ENCODE measurements at regions of chr19 and their contacts with region 1.

Region 1: DNA sequence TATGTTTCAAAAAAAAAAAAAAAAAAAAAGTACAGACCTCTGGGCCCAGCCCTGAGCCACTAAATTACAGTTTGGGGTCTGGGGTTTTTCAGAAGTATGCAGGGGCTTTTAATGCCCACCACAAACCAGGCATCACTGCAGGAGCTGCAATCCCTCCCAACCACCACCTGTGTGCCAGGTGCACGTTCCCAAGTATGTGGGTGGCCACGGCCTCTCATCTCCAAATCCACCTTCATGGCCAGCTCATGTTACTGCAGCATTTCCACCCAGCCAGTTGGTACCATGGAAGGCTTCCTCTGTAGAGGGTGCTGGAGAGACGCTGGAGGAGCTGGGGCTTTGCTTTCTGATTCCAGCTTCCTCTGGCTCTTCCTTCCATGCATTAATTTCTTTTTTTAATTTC is 26.5 kb downstream of the CEP89 start:
- DNase-seq: no peak
- ATAC-seq: no peak
- H3K4me3 ChIP-seq: no peak overlapping the region
- H3K27ac ChIP-seq: no peak overlapping the region
- H3K4me1 ChIP-seq: no peaks in the 10 kb centered on the region
- H3K27me3 ChIP-seq: no peaks in the 10 kb centered on the region
- CTCF ChIP-seq: no peak

Region 2: DNA sequence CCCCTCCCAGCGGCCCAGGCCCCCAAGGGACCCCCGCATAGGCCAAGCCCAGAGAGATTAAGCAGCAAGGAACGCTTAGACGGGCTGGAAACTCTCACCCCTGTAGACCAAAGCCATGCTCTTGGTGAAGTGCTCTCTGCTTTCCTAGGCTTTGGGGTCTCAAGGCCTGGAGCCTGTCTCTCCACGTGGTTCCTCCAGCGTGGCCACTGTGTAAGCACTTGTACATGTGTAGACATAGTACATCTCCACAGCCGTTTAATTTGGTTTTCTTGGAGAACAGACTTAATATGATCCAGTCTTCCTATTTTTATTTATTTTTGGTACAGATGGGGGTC is 252.6 kb before region 1 on chr19:
- CTCF ChIA-PET with region 1: no interaction called
- POLR2A ChIA-PET with region 1: interaction called, 10 read pairs
- in situ Hi-C with region 1: no loop called
- intact Hi-C with region 1: no loop called
- DNase-seq: no peak
- ATAC-seq: peak; percentile 6
- H3K4me3 ChIP-seq: peak overlapping the region; percentile 78 to 83
- H3K27ac ChIP-seq: peak overlapping the region; percentile 96
- H3K4me1 ChIP-seq: peaks cover 13% of the 10 kb centered on the region
- H3K27me3 ChIP-seq: no peaks in the 10 kb centered on the region
- CTCF ChIP-seq: no peak

Region 3: DNA sequence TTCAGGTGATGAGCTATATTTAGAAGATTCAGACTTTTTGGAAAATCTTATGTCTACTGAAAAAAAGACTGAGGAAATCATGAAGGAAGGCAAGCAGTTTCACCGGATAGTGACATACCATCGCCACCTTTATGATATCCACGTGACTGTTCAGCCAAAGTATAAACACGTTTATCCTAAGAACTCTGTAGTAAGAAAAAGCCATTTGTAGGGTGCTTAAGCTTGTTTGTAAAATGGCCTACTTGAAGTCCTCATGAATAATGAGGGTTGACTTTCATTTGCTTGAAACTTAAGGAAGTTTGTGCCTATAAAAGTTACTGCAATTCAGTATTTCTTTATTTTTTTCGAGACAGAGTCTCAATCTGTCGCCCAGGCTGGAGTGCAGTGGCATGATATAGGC is 233.5 kb before region 1 on chr19:
- CTCF ChIA-PET with region 1: interaction called, 12 read pairs
- POLR2A ChIA-PET with region 1: no interaction called
- in situ Hi-C with region 1: no loop called
- intact Hi-C with region 1: no loop called
- DNase-seq: no peak
- ATAC-seq: no peak
- H3K4me3 ChIP-seq: no peak overlapping the region
- H3K27ac ChIP-seq: no peak overlapping the region
- H3K4me1 ChIP-seq: no peaks in the 10 kb centered on the region
- H3K27me3 ChIP-seq: no peaks in the 10 kb centered on the region
- CTCF ChIP-seq: no peak

Region 4: GRCh38 chr19:33273881-33274682 is 328.8 kb after region 1 on chr19:
- CTCF ChIA-PET with region 1: no interaction called
- POLR2A ChIA-PET with region 1: no interaction called
- in situ Hi-C with region 1: no loop called
- intact Hi-C with region 1: no loop called
- DNase-seq: no peak
- ATAC-seq: peak; percentile 66; the same call in 1 of the 2 replicates
- H3K4me3 ChIP-seq: no peak overlapping the region
- H3K27ac ChIP-seq: no peak overlapping the region
- H3K4me1 ChIP-seq: peaks cover 10% of the 10 kb centered on the region
- H3K27me3 ChIP-seq: no peaks in the 10 kb centered on the region
- CTCF ChIP-seq: no peak

Measured in Panc1 (cell line).